ENCODE measurements at regions of chr6 and their contacts with region 1.

Region 1: DNA sequence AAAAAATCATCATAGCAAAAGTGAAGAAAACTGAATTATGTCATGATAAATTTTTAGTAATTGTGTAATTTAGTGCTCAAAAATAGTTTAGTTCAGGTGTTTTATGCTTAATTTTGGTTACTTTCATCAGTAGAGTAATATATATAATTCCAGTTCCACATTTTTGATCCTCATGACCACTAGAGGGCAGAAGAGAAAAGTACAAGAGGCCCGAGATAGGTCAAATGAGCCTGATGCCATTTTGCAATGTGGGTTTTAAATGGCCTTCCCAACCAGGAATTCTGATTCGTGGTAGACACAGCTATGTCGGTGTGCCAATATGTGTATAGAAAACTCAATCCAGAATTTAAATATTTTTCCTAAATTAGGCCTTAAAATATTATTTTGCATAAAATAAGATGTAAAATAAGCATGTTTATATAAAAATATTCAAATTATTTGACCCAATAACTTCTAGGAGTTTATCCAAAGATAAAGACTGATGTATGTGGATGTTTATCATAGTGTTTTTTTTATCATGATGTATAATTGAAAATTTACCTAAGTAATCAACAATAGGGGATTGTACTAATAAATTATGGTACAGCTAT is 159.7 kb upstream of the RPS6KA2 start:
- DNase-seq: peak; percentile 59 to 79 (median 61)
- ATAC-seq: peak; percentile 81
- H3K4me3 ChIP-seq: no peak overlapping the region
- H3K27ac ChIP-seq: no peak overlapping the region
- H3K4me1 ChIP-seq: no peaks in the 10 kb centered on the region; a peak in 1 of 5 replicates
- H3K27me3 ChIP-seq: no peaks in the 10 kb centered on the region
- CTCF ChIP-seq: peak; percentile 68 to 87 (median 69)
- EP300 ChIP-seq: no peak
- POLR2A ChIP-seq: no peak
- RAD21 ChIP-seq: peak; percentile 93 to 96

Region 2: GRCh38 chr6:166664135-166664534 is 122.7 kb before region 1 on chr6:
- CTCF ChIA-PET with region 1: no interaction called
- POLR2A ChIA-PET with region 1: no interaction called
- in situ Hi-C with region 1: no loop called
- intact Hi-C with region 1: no loop called
- DNase-seq: no peak
- ATAC-seq: no peak
- H3K4me3 ChIP-seq: no peak overlapping the region
- H3K27ac ChIP-seq: no peak overlapping the region
- H3K4me1 ChIP-seq: no peaks in the 10 kb centered on the region
- H3K27me3 ChIP-seq: peaks cover 16 to 52% of the 10 kb centered on the region in 2 experiments
- CTCF ChIP-seq: no peak
- EP300 ChIP-seq: no peak
- POLR2A ChIP-seq: no peak
- RAD21 ChIP-seq: no peak

Region 3: DNA sequence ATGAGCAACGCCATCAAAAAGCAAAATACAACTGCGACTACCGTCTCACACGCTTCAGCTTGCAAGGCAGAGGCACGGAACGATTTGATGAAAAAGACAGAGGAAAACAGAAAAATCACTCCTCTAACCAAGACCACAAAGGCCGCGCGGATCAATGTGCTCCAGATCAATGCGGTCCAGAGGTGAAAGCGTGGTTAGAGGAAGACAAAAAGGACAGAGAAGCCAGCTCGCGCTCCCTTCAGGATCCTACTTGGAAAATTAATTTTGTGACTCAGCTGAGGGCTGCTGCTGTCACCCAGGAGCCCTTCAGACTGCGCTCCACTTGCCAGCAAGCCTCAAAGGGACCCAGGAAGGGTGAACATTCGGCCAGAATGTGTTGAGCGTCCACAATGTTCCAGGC is 19.6 kb before region 1 on chr6:
- CTCF ChIA-PET with region 1: no interaction called
- POLR2A ChIA-PET with region 1: no interaction called
- in situ Hi-C with region 1: no loop called
- intact Hi-C with region 1: no loop called
- DNase-seq: no peak
- ATAC-seq: no peak
- H3K4me3 ChIP-seq: no peak overlapping the region
- H3K27ac ChIP-seq: no peak overlapping the region
- H3K4me1 ChIP-seq: peaks cover 0 to 7% of the 10 kb centered on the region in 2 experiments; a peak in 2 of 5 replicates
- H3K27me3 ChIP-seq: peaks cover 73 to 86% of the 10 kb centered on the region in 2 experiments
- CTCF ChIP-seq: no peak
- EP300 ChIP-seq: no peak
- POLR2A ChIP-seq: no peak
- RAD21 ChIP-seq: no peak

Region 4: GRCh38 chr6:166950443-166950821 is 163.6 kb after region 1 on chr6:
- CTCF ChIA-PET with region 1: interaction called, 9 read pairs
- POLR2A ChIA-PET with region 1: no interaction called
- in situ Hi-C with region 1: no loop called
- intact Hi-C with region 1: loop called (anchors 1 kb)
- DNase-seq: no peak
- ATAC-seq: no peak
- H3K4me3 ChIP-seq: no peak overlapping the region
- H3K27ac ChIP-seq: peak overlapping the region; percentile 75; the same call in 2 of the 3 replicates
- H3K4me1 ChIP-seq: peaks cover 20 to 25% of the 10 kb centered on the region in 2 experiments
- H3K27me3 ChIP-seq: no peaks in the 10 kb centered on the region
- CTCF ChIP-seq: no peak
- EP300 ChIP-seq: no peak
- POLR2A ChIP-seq: no peak
- RAD21 ChIP-seq: no peak

Region 5: DNA sequence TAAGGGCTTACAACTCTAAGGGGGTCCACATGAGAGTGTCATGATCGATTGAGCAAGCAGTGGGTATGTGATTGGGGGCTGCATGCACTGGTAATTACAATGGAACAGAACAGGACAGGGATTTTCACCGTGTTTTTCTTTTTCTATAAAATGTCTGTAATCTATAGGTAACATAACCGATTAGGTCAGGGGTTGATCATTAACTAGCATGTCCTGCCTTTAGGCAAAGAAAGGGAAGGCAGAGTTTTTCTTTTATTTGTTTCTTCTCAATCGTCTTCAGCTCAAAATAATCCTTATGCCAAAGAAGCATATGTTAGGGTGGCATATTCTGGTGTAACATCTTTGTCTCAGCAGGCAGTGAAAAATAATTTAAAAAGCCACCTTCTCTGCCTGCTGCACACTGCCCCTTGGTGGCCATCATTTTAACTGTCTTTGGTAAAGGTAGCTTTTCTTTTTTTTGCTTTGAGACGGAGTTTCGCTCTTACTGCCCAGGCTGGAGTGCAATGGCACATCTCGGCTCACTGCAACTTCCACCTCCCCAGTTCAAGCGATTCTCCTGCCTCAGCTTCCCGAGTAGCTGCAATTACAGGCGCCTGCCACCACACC is 202.7 kb after region 1 on chr6:
- CTCF ChIA-PET with region 1: interaction called, 28 read pairs
- POLR2A ChIA-PET with region 1: no interaction called
- in situ Hi-C with region 1: no loop called
- intact Hi-C with region 1: loop called (anchors 1 kb)
- DNase-seq: peak in 2 of 4 experiments; percentile 26 to 45
- ATAC-seq: peak; percentile 83
- H3K4me3 ChIP-seq: no peak overlapping the region
- H3K27ac ChIP-seq: no peak overlapping the region
- H3K4me1 ChIP-seq: no peaks in the 10 kb centered on the region
- H3K27me3 ChIP-seq: no peaks in the 10 kb centered on the region
- CTCF ChIP-seq: peak; percentile 53 to 75 (median 61); a peak in 3 of 6 replicates
- EP300 ChIP-seq: no peak
- POLR2A ChIP-seq: no peak
- RAD21 ChIP-seq: peak; percentile 55 to 74

Region 6: DNA sequence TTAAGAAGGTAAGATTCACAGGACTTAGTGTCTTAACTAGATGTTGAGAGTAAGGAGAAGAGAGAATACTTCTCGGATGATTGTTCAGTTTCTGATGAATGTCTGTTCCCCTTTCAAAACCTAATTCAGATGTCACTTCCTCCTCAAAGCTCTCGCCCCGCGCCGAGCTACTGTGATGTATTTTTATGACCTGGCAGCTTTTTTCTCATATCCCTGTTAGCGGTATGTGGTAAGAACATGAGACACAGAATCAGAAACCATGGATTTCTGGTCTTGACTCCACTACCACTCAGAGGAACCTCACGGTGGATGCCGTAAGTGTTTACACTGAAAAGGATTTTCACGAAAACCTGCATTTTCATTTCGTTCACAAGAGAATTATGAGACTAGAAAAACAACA is 260.8 kb after region 1 on chr6:
- CTCF ChIA-PET with region 1: no interaction called
- POLR2A ChIA-PET with region 1: no interaction called
- in situ Hi-C with region 1: no loop called
- intact Hi-C with region 1: loop called (anchors 5 kb)
- DNase-seq: no peak
- ATAC-seq: no peak
- H3K4me3 ChIP-seq: no peak overlapping the region
- H3K27ac ChIP-seq: no peak overlapping the region
- H3K4me1 ChIP-seq: no peaks in the 10 kb centered on the region
- H3K27me3 ChIP-seq: no peaks in the 10 kb centered on the region
- CTCF ChIP-seq: no peak
- EP300 ChIP-seq: no peak
- POLR2A ChIP-seq: no peak
- RAD21 ChIP-seq: no peak

Region 7: DNA sequence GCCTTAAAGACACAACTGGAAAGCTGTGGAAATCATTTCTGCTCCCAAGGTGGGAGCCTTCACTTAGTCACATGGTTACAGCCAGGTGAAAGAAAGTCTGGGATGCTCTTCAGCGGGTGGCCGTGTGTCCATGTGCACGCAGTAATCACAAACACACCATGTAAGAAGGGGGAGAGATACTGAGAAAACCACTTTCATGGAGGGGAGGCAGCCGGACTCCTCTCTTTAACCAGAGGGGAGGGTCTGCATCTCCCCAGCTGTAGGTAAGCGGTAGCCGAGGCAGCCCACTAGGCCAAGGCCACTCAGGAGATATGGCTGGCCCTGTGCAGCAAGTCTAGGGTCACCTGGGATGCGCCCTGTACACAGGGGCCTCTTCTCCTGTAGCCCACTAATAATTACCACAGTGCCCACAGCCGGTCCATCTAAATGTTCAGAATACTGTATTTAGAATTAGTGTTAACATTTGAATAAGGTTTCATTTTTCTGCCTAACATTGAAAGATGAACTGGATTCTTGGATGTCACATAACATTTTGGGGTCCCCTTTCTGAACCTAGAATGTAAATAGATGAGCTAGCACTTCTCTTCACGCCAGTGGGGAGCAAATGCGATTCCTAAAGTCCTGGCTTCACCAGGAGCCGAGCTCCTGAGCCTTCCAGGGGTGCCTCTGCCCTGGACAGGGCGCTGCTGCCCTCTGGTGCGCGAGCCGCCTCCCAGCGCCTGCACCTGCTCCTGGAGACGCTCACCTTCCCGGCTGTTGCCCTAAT is 355.1 kb after region 1 on chr6:
- CTCF ChIA-PET with region 1: interaction called, 10 read pairs
- POLR2A ChIA-PET with region 1: no interaction called
- in situ Hi-C with region 1: no loop called
- intact Hi-C with region 1: loop called (anchors 1 kb)
- DNase-seq: peak; percentile 32 to 60 (median 44)
- ATAC-seq: peak; percentile 96
- H3K4me3 ChIP-seq: no peak overlapping the region
- H3K27ac ChIP-seq: no peak overlapping the region
- H3K4me1 ChIP-seq: no peaks in the 10 kb centered on the region
- H3K27me3 ChIP-seq: peaks cover 28 to 64% of the 10 kb centered on the region in 2 experiments
- CTCF ChIP-seq: peak; percentile 84 to 89 (median 85)
- EP300 ChIP-seq: no peak
- POLR2A ChIP-seq: no peak
- RAD21 ChIP-seq: peak; percentile 86 to 95

Region 8: DNA sequence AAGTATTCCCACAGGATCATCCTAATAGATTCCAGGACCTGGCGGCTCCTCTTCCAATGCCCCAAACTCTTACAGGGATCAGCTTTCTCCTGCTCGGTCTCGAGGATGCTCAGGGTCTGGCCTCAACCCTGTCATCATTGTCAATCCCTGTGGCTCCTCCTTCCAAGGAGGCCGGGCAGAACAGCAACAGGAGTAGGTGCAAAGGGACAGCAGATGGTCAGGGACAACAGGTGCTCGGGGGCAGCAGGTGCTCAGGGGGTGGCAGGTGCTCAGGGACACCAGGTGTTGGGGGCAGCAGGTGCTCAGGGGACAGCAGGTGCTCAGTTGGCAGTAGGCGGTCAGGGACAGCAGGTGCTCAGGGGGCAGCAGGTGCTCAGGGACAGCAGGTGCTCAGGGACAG is 622.9 kb after region 1 on chr6:
- CTCF ChIA-PET with region 1: no interaction called
- POLR2A ChIA-PET with region 1: no interaction called
- in situ Hi-C with region 1: no loop called
- intact Hi-C with region 1: no loop called
- DNase-seq: no peak
- ATAC-seq: no peak
- H3K4me3 ChIP-seq: no peak overlapping the region
- H3K27ac ChIP-seq: no peak overlapping the region
- H3K4me1 ChIP-seq: no peaks in the 10 kb centered on the region
- H3K27me3 ChIP-seq: peaks cover 10 to 79% of the 10 kb centered on the region in 2 experiments; a peak in 4 of 5 replicates
- CTCF ChIP-seq: no peak
- EP300 ChIP-seq: no peak
- POLR2A ChIP-seq: no peak
- RAD21 ChIP-seq: no peak